ENCODE measurements at regions of chr5 and their contacts with region 1.

Region 1: DNA sequence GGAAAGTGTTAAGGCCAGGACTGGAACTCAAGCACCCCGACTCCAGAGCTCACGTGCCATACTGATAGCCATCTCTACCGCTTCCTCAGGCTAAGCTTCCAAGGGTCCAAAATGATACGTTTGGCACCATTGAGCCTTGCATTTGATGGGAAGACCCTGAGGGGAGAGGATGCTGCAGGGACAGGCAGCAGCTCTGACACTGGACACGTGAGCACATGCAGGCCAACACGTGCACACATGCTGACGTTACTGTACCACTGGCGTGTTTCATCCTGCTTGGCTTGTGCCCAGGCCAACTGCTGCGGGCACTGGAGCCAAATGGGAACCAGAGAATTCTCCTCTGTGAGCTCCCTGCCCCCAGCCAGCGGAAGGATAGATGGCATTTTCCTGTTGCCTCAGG is 5.2 kb downstream of the FAT2 start:
- DNase-seq: peak; percentile 55 to 80
- ATAC-seq: peak; percentile 83 to 89
- H3K4me3 ChIP-seq: no peak overlapping the region
- H3K27ac ChIP-seq: peak overlapping the region in 1 of 4 donors; percentile 29
- H3K4me1 ChIP-seq: peaks cover 11 to 13% of the 10 kb centered on the region in 2 donors
- H3K27me3 ChIP-seq: no peaks in the 10 kb centered on the region
- CTCF ChIP-seq: no peak
- POLR2A ChIP-seq: no peak

Region 2: GRCh38 chr5:151202381-151203139 is 383.4 kb before region 1 on chr5:
- in situ Hi-C with region 1: no loop called
- intact Hi-C with region 1: no loop called
- DNase-seq: no peak
- ATAC-seq: peak in 1 of 2 donors; percentile 60
- H3K4me3 ChIP-seq: no peak overlapping the region
- H3K27ac ChIP-seq: peak overlapping the region; percentile 25 to 56 (median 35)
- H3K4me1 ChIP-seq: peaks cover 4 to 9% of the 10 kb centered on the region in 2 donors
- H3K27me3 ChIP-seq: no peaks in the 10 kb centered on the region
- CTCF ChIP-seq: no peak
- POLR2A ChIP-seq: no peak

Region 3: GRCh38 chr5:151384106-151384505 is 201.9 kb before region 1 on chr5:
- in situ Hi-C with region 1: no loop called
- intact Hi-C with region 1: no loop called
- DNase-seq: no peak
- ATAC-seq: peak; percentile 8 to 40
- H3K4me3 ChIP-seq: peak overlapping the region in 3 of 4 donors; percentile 26 to 33 (median 28)
- H3K27ac ChIP-seq: peak overlapping the region; percentile 93 to 97 (median 96)
- H3K4me1 ChIP-seq: peaks cover 26% of the 10 kb centered on the region in 2 donors
- H3K27me3 ChIP-seq: no peaks in the 10 kb centered on the region
- CTCF ChIP-seq: no peak
- POLR2A ChIP-seq: no peak

Region 4: GRCh38 chr5:151612689-151613427 is 26.9 kb after region 1 on chr5:
- in situ Hi-C with region 1: no loop called
- intact Hi-C with region 1: loop called (anchors 1 kb)
- DNase-seq: peak; percentile 65 to 86
- ATAC-seq: peak; percentile 98 to 99
- H3K4me3 ChIP-seq: no peak overlapping the region
- H3K27ac ChIP-seq: peak overlapping the region; percentile 41 to 69 (median 54)
- H3K4me1 ChIP-seq: peaks cover 0 to 8% of the 10 kb centered on the region in 2 donors
- H3K27me3 ChIP-seq: no peaks in the 10 kb centered on the region
- CTCF ChIP-seq: no peak
- POLR2A ChIP-seq: no peak

Region 5: GRCh38 chr5:151632524-151632923 is 46.6 kb after region 1 on chr5:
- in situ Hi-C with region 1: no loop called
- intact Hi-C with region 1: no loop called
- DNase-seq: no peak
- ATAC-seq: no peak
- H3K4me3 ChIP-seq: no peak overlapping the region
- H3K27ac ChIP-seq: no peak overlapping the region
- H3K4me1 ChIP-seq: no peaks in the 10 kb centered on the region
- H3K27me3 ChIP-seq: no peaks in the 10 kb centered on the region
- CTCF ChIP-seq: no peak
- POLR2A ChIP-seq: no peak

Measured in gastrocnemius medialis (tissue), 4 donors.